ENCODE measurements at regions of chr6 and their contacts with region 1.

Region 1: DNA sequence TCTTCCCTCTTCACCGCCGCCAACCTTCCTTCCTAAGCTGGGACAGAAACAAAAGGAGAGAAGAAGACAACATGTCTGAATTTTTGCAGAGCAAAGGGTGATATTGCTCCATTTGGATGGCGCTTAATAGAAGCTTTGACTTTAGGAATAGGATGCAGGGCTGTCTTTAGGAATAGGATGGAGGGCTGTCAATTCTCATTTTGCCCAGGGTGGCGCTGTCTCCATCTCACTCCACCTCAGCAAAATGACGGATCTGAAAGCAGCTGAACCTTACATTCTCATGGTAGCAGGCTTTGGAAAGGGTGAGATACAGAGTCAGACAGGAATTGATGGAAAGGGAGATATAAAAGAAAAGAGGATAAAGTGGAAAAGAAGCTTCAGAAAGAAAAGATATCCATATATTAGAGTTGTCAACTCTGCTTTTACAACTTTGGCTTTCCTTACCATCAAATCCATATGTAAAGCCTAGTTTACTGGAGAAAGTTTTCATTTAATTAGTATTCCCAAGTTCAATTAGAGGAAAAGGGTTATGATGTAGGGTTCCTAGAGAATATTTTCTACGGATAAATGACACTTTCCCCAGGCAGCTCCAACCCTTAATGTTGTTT is 2.4 kb downstream of the MTCL3 start:
- DNase-seq: peak in 5 of 9 donors; percentile 29 to 44 (median 34)
- ATAC-seq: peak; percentile 58
- H3K4me3 ChIP-seq: peak overlapping the region; percentile 58
- H3K4me3 Mint-ChIP-seq: peak overlapping the region; percentile 84 to 98 (median 88)
- H3K27ac ChIP-seq: no peak overlapping the region
- H3K27ac Mint-ChIP-seq: peak overlapping the region in 7 of 9 donors; percentile 18 to 85 (median 79)
- H3K4me1 ChIP-seq: peaks cover 15 to 17% of the 10 kb centered on the region in 2 donors
- H3K4me1 Mint-ChIP-seq: peaks cover 23 to 44% (median 32%) of the 10 kb centered on the region in 7 donors
- H3K27me3 ChIP-seq: peaks cover 0 to 21% of the 10 kb centered on the region in 2 donors
- H3K27me3 Mint-ChIP-seq: peaks cover 27 to 38% (median 37%) of the 10 kb centered on the region in 5 donors

Region 2: DNA sequence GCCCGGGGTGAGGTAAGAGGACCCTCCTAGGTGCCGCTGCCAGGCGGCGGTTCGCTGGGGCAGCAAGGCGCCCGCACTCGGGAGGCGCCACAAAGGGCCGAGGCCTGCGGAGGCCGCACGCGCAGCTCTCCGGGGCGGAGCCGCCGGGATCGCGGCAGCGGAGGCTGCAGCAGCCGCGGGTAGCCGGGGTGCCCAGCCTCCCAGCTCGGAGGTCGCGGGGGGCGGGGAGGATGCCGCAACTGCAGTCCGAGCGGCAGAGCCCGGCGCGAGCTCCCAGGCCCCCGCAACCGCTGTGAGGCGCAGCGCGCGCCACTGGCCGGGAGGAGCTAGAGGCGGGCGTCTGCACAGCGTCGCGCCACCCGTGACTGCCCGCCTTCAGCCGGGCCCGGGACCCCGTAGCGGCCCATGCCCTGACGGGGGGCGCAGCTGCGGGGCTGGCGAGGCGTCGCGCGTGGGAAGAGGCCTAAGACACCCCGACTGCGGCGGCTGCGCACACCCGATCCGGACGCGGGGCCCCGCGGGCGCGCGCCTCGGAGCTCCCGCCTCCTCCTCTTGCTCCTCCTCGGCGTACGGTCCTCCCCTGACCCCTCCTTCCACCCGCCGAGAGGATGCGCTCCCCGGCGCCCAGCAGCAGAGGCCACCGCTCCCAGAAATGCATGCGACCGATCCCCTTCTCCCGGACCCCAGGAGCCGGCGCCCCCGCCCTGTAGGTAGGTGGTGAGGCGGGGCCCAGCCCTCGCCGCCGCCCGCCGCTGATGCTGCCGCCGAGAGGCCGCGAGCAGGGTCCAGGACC is 1726.2 kb before region 1 on chr6 and contains the start of gene NCOA7:
- CTCF ChIA-PET with region 1: no interaction called
- POLR2A ChIA-PET with region 1: no interaction called
- intact Hi-C with region 1: loop called in 1 of 2 experiments (anchors 2 kb)
- DNase-seq: peak; percentile 69 to 84 (median 81)
- ATAC-seq: peak; percentile 89
- H3K4me3 ChIP-seq: peak within 1 kb of the TSS; percentile 80
- H3K4me3 Mint-ChIP-seq: peak within 1 kb of the TSS; percentile 86 to 98 (median 93)
- H3K27ac ChIP-seq: peak within 1 kb of the TSS; percentile 96
- H3K27ac Mint-ChIP-seq: peak within 1 kb of the TSS; percentile 97 to 100 (median 98)
- H3K4me1 ChIP-seq: peaks cover 28 to 37% of the 10 kb centered on the region in 2 donors
- H3K4me1 Mint-ChIP-seq: peaks cover 29 to 60% (median 51%) of the 10 kb centered on the region in 7 donors
- H3K27me3 ChIP-seq: no peaks in the 10 kb centered on the region
- H3K27me3 Mint-ChIP-seq: no peaks in the 10 kb centered on the region
- total RNA-seq, gene NCOA7: 30.6 to 55.6 (median 38.0) TPM

Region 3: DNA sequence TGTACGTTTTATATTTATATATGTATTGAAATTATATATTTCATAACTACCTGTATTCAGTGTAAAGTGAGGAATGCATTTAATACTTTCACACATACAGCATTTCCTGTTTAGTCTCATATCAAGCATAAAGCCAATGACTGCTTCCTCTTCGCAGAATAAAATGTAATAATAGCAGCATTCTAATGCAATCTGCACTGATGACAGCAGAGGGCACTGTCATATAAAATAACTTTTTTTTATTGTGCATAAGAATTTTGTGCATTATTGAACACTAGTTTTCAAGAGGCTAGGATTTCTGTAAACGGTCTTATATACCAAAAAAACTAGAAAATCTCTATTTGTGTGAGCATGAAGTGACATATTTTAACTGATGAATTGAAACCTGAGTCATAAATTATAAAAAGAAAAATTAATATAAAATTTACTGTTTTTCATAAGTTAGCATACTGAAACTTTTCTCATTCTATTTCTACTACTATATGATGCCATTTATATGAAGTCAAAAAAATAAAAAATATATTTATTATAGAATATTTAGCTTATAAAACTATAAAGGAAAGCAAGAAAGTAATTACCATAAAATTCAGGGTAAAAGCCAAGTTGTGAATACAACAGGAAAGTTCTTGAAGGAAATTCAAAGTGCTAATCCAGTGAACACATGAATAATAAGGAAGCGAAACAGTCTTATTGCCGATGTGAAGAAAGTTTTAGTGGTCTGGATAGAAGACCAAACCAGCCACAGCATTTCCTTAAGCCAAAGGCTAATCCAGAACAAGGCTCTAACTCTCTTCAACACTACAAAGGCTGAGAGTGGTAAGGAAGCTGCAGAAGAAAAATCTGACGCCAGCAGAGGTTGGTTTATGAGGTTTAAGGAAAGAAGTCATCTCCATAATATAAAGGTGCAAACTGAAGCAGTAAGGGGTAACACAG is 213.8 kb before region 1 on chr6:
- CTCF ChIA-PET with region 1: interaction called, 5 read pairs
- POLR2A ChIA-PET with region 1: no interaction called
- intact Hi-C with region 1: loop called in 1 of 2 experiments (anchors 5 kb)
- DNase-seq: peak in 7 of 9 donors; percentile 24 to 57 (median 47)
- ATAC-seq: peak; percentile 92
- H3K4me3 ChIP-seq: no peak overlapping the region
- H3K4me3 Mint-ChIP-seq: no peak overlapping the region
- H3K27ac ChIP-seq: no peak overlapping the region
- H3K27ac Mint-ChIP-seq: peak overlapping the region in 4 of 9 donors; percentile 1 to 62 (median 34)
- H3K4me1 ChIP-seq: no peaks in the 10 kb centered on the region
- H3K4me1 Mint-ChIP-seq: peaks cover 9 to 59% (median 49%) of the 10 kb centered on the region in 7 donors
- H3K27me3 ChIP-seq: no peaks in the 10 kb centered on the region
- H3K27me3 Mint-ChIP-seq: no peaks in the 10 kb centered on the region

Region 4: DNA sequence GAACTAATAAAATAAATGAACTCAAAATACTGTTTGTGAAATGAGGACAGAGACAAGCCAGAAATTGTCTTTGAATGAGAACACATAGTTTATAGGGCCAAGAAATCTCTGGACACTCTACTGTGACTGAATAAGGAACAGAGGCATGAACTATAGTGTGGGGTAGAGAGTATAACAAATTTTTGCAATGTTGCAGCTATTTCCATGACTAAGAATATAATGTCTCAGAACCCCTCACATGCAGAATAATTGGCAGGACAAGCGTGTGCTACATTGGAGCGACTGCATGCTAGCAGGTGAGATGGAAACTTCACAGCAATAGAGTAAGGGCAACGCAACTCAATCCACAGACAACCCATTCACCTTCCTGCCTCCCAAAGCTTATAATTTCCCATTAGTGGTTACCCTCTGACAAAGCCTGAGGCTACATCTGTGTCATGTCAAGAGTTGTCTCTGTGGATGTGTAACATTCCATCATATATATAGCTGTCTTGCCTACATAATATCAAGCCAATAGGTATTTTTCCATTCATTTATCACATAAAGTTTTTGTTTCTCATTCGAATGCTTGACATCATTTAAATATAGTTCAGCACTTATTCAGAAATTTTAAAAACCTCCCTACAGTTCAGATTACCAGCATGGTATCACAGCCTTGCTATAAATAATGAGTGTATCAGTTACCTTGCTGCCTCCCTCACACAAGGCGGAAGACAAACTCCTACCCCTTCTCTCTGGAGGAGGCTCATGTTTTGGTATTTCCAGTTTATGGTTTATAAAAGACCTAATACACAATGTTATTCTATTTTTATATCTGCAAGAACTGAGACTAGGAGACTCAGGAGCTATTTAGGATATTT is 125.4 kb before region 1 on chr6:
- CTCF ChIA-PET with region 1: no interaction called
- POLR2A ChIA-PET with region 1: no interaction called
- intact Hi-C with region 1: no loop called
- DNase-seq: no peak
- ATAC-seq: no peak
- H3K4me3 ChIP-seq: no peak overlapping the region
- H3K4me3 Mint-ChIP-seq: no peak overlapping the region
- H3K27ac ChIP-seq: no peak overlapping the region
- H3K27ac Mint-ChIP-seq: no peak overlapping the region
- H3K4me1 ChIP-seq: no peaks in the 10 kb centered on the region
- H3K4me1 Mint-ChIP-seq: no peaks in the 10 kb centered on the region
- H3K27me3 ChIP-seq: no peaks in the 10 kb centered on the region
- H3K27me3 Mint-ChIP-seq: peaks cover 0 to 3% (median 0%) of the 10 kb centered on the region in 5 donors

Region 5: DNA sequence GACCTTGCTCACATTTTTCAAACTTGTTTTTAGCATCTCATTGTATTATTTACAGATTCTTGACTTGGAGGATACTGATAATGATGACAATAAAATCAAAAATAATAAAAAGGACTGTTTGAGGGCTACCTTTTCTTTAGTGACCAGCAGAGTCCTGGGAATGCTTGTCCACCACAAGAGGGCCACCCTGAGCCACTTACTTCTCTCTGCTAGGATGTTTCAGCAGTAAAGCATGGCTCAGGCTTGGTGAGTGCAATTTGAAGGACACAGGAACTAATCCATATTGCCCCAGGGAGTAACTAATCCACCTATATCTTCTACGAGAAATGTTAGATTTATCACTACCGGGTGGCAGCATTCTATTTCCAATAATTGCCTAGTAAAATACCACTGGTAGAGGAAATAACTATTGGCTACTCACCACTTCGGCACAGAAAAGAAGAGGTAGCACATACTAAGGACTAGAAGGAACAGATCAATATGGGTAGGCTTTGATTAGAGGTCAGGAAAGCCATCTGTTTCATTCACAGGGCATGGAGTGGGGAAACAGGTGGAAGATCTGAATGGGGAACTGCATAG is 51.8 kb before region 1 on chr6:
- CTCF ChIA-PET with region 1: interaction called, 9 read pairs
- POLR2A ChIA-PET with region 1: no interaction called
- intact Hi-C with region 1: loop called (anchors 1 kb)
- DNase-seq: peak; percentile 11 to 53 (median 39)
- ATAC-seq: peak; percentile 83
- H3K4me3 ChIP-seq: no peak overlapping the region
- H3K4me3 Mint-ChIP-seq: no peak overlapping the region
- H3K27ac ChIP-seq: no peak overlapping the region
- H3K27ac Mint-ChIP-seq: no peak overlapping the region
- H3K4me1 ChIP-seq: no peaks in the 10 kb centered on the region
- H3K4me1 Mint-ChIP-seq: peaks cover 0 to 13% (median 0%) of the 10 kb centered on the region in 7 donors
- H3K27me3 ChIP-seq: no peaks in the 10 kb centered on the region
- H3K27me3 Mint-ChIP-seq: no peaks in the 10 kb centered on the region

Region 6: GRCh38 chr6:127539272-127539671 is 22.5 kb after region 1 on chr6:
- CTCF ChIA-PET with region 1: interaction called, 4 read pairs
- POLR2A ChIA-PET with region 1: interaction called, 3 read pairs
- intact Hi-C with region 1: loop called in 1 of 2 experiments (anchors 2 kb)
- DNase-seq: peak in 3 of 9 donors; percentile 18 to 30 (median 22)
- ATAC-seq: peak; percentile 65
- H3K4me3 ChIP-seq: no peak overlapping the region
- H3K4me3 Mint-ChIP-seq: no peak overlapping the region
- H3K27ac ChIP-seq: no peak overlapping the region
- H3K27ac Mint-ChIP-seq: no peak overlapping the region
- H3K4me1 ChIP-seq: no peaks in the 10 kb centered on the region
- H3K4me1 Mint-ChIP-seq: peaks cover 0 to 3% (median 0%) of the 10 kb centered on the region in 7 donors
- H3K27me3 ChIP-seq: no peaks in the 10 kb centered on the region
- H3K27me3 Mint-ChIP-seq: peaks cover 12 to 30% (median 18%) of the 10 kb centered on the region in 5 donors

Region 7: GRCh38 chr6:128520436-128521281 is 1003.9 kb after region 1 on chr6 and contains the start of gene PTPRK:
- CTCF ChIA-PET with region 1: no interaction called
- POLR2A ChIA-PET with region 1: no interaction called
- intact Hi-C with region 1: loop called in 1 of 2 experiments (anchors 5 kb)
- DNase-seq: peak; percentile 70 to 90 (median 87)
- ATAC-seq: peak; percentile 95
- H3K4me3 ChIP-seq: peak within 1 kb of the TSS; percentile 77
- H3K4me3 Mint-ChIP-seq: peak within 1 kb of the TSS; percentile 90 to 98 (median 94)
- H3K27ac ChIP-seq: peak within 1 kb of the TSS; percentile 59
- H3K27ac Mint-ChIP-seq: peak within 1 kb of the TSS; percentile 73 to 94 (median 82)
- H3K4me1 ChIP-seq: peaks cover 5 to 17% of the 10 kb centered on the region in 2 donors
- H3K4me1 Mint-ChIP-seq: peaks cover 8 to 22% (median 14%) of the 10 kb centered on the region in 7 donors
- H3K27me3 ChIP-seq: no peaks in the 10 kb centered on the region
- H3K27me3 Mint-ChIP-seq: peaks cover 52 to 89% (median 68%) of the 10 kb centered on the region in 5 donors
- total RNA-seq, gene PTPRK: 1.6 to 6.5 (median 3.9) TPM

Measured in naive thymus-derived CD4-positive, alpha-beta T cell (primary cell).